Sciatic nerve (tissue), 2 donors: ENCODE measurements at regions of chr16 and their contacts with region 1.

Region 1: GRCh38 chr16:66604376-66605176 is at the start of gene CMTM3:
- DNase-seq: peak; percentile 86
- ATAC-seq: peak; percentile 58
- total RNA-seq, gene CMTM3: 44.5 TPM

Region 2: GRCh38 chr16:66406534-66407221 is 197.9 kb before region 1 on chr16:
- intact Hi-C with region 1: loop called (anchors 5 kb)
- DNase-seq: peak; percentile 95
- ATAC-seq: peak; percentile 93